Activated CD4-positive, alpha-beta T cell treated with anti-CD3 and anti-CD28 coated beads, Interleukin-2, amount 10 ng/mL, durations not matched to agents 7 days and 5 days (primary cell): ENCODE measurements at regions of chr1 and their contacts with region 1.

Region 1: DNA sequence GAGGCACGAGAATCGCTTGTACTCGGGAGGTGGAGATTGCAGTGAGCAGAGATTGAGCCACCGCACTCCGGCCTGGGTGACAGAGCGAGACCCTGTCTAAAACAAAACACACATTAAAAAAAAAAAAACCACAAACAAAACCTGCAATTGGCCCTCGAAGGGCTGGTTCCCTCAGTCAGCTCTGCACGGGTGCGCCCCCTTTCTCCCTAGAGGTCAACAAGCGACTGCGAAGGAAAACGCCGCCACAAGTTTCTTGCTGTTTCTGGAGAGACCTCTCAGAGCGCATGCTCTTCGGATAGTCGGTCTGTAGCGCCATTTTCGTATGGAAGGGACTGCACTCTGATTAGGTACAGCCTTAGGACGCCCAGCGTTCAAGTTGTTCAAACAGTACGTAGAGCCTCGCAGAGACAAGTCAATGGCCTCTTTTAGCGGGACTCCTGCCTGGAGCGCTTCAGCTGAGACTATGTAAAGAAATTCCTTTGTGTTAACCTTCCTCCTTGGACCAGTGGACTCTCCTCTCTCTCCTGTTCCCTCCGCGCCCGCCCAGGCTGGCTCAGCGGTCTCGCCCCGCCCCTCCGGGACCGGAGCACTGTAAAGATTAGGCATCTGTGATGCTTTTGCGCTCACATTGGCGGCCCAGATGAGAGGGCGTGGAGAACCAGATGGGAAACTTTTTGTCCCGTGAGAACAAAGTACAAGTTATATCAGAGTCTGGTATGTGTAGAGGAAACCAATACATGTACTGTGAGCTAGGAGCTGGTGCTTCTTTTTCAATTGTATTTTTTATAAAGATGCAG is 1.0 kb upstream of the CDC14A start:
- DNase-seq: peak; percentile 90
- H3K4me3 Mint-ChIP-seq: peak overlapping the region; percentile 91
- H3K27ac Mint-ChIP-seq: peak overlapping the region; percentile 97
- H3K4me1 Mint-ChIP-seq: peaks cover 33% of the 10 kb centered on the region
- H3K27me3 Mint-ChIP-seq: no peaks in the 10 kb centered on the region

Region 2: GRCh38 chr1:100265931-100266740 is 85.2 kb before region 1 on chr1 and contains the start of gene RTCA:
- CTCF ChIA-PET with region 1: interaction called, 11 read pairs
- POLR2A ChIA-PET with region 1: no interaction called
- DNase-seq: peak; percentile 97
- H3K4me3 Mint-ChIP-seq: peak within 1 kb of the TSS; percentile 96
- H3K27ac Mint-ChIP-seq: peak within 1 kb of the TSS; percentile 98
- H3K4me1 Mint-ChIP-seq: peaks cover 42% of the 10 kb centered on the region
- H3K27me3 Mint-ChIP-seq: no peaks in the 10 kb centered on the region
- total RNA-seq, gene RTCA: 48.2 to 50.6 TPM

Region 3: DNA sequence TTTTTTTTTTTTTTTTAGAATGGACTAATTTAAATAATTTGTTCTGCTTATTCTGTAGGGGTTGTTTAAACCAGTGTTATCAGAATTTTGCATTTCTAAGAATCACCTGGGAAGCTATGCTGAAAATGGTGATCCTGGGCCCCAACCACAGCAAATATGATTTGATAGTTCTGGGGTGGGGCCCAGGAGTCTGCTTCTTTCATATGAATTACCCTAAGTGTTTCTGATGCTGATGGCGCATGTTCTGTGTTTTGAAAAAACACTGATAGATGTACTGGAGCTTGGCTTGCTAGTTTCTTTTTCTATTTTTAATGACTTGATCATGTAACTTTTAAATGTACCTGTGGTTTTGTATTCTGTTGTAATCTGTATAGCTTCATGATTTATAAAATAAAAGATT is 90.4 kb after region 1 on chr1:
- CTCF ChIA-PET with region 1: no interaction called
- POLR2A ChIA-PET with region 1: interaction called, 18 read pairs
- DNase-seq: peak; percentile 59
- H3K4me3 Mint-ChIP-seq: peak overlapping the region; percentile 30
- H3K27ac Mint-ChIP-seq: peak overlapping the region; percentile 92
- H3K4me1 Mint-ChIP-seq: peaks cover 75% of the 10 kb centered on the region
- H3K27me3 Mint-ChIP-seq: no peaks in the 10 kb centered on the region